ENCODE measurements at regions of chr4 and their contacts with region 1.

Region 1: GRCh38 chr4:53377319-53378170 is at the start of gene FIP1L1:
- DNase-seq: peak; percentile 98
- total RNA-seq, gene FIP1L1: 39.2 TPM

Region 2: GRCh38 chr4:53026233-53026632 is 351.3 kb before region 1 on chr4:
- intact Hi-C with region 1: no loop called
- DNase-seq: no peak

Region 3: GRCh38 chr4:53346920-53347852 is 30.4 kb before region 1 on chr4:
- intact Hi-C with region 1: no loop called
- DNase-seq: no peak

Region 4: GRCh38 chr4:53365486-53366300 is 11.9 kb before region 1 on chr4 and contains the start of gene SCFD2:
- intact Hi-C with region 1: loop called (anchors 1 kb)
- DNase-seq: peak; percentile 98
- total RNA-seq, gene SCFD2: 9.7 TPM